Dorsolateral prefrontal cortex (tissue), 120 donors: ENCODE measurements at regions of chr4 and their contacts with region 1.

Region 1: GRCh38 chr4:76305971-76306881 is at the start of gene STBD1:
- DNase-seq: peak in 7 of 10 donors; percentile 8 to 67 (median 48)
- H3K4me3 ChIP-seq: peak within 1 kb of the TSS; percentile 56 to 92 (median 80)
- H3K27ac ChIP-seq: peak within 1 kb of the TSS in 49 of 59 donors; percentile 5 to 86 (median 54)
- H3K27me3 ChIP-seq: no peaks in the 10 kb centered on the region
- CTCF ChIP-seq: peak in 4 of 56 donors; percentile 2 to 13 (median 9)
- total RNA-seq, gene STBD1: 1.1 to 7.0 (median 3.3) TPM

Region 2: GRCh38 chr4:76188557-76188956 is 117.7 kb before region 1 on chr4:
- intact Hi-C with region 1: loop called in 1 of 2 experiments (anchors 5 kb)
- DNase-seq: no peak
- H3K4me3 ChIP-seq: no peak overlapping the region
- H3K27ac ChIP-seq: peak overlapping the region in 57 of 59 donors; percentile 13 to 99 (median 78)
- H3K27me3 ChIP-seq: no peaks in the 10 kb centered on the region
- CTCF ChIP-seq: no peak

Region 3: DNA sequence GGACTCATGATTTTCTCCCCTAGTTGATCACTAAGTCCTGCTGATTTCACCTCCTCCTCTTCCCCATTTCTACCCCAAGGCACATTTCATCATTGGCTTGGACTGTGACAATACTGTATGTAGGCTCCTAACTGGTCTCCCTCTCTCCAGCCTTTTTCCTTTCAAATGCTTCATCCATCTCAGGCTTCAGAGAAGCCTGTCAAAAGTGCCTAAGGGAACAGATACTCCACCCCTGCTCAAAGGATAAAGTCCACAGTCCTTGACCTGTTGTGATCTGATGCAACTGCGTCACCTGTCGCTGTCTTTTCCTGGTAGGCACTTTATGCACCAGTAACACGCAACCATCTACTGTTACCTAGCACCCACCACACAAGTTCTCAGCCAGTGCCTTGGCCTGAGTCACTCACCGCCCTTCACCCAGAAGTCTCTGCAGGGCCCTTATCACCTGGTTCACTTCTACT is 105.4 kb before region 1 on chr4:
- intact Hi-C with region 1: no loop called
- DNase-seq: no peak
- H3K4me3 ChIP-seq: peak overlapping the region in 5 of 59 donors; percentile 8 to 61 (median 31)
- H3K27ac ChIP-seq: peak overlapping the region; percentile 72 to 100 (median 97)
- H3K27me3 ChIP-seq: no peaks in the 10 kb centered on the region
- CTCF ChIP-seq: no peak